ENCODE measurements at regions of chr3 and their contacts with region 1.

Region 1: DNA sequence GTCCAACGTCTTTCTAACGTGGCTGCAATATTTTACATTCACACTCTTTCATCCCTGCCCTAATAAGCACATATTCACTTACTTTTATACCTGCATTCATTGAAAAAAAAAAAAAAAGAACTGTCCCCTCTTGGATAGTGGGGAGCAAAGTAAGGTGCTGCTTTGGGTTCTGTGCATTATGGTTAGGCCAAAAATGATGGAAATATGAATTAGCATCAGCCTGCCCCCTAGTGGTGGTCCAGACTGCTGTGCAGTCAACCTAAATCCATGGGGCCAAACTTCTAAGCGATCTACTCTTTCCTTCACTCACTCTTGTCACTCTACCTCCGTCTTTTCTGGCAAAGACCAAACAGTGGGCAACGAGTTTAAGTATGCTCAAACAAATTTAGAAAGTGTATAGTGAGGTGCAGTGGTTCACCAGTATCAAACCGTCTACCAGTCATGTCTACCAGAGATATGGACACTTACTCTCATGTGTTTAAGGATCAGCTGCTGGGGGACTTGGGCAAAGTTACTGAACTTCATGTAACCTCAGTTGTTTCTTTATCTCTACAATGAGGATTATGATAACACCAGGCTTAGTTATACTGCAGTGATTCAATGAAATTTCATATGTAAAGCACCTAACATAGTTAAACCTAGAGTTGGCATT is 61.5 kb upstream of the GRM7 start:
- DNase-seq: no peak
- ATAC-seq: peak; percentile 96
- H3K4me3 ChIP-seq: no peak overlapping the region
- H3K27ac ChIP-seq: no peak overlapping the region
- H3K4me1 ChIP-seq: no peaks in the 10 kb centered on the region
- H3K27me3 ChIP-seq: no peaks in the 10 kb centered on the region
- CTCF ChIP-seq: peak; percentile 76 to 81 (median 78)
- EP300 ChIP-seq: no peak
- POLR2A ChIP-seq: no peak
- RAD21 ChIP-seq: peak; percentile 82

Region 2: GRCh38 chr3:5304789-5305683 is 1494.4 kb before region 1 on chr3:
- CTCF ChIA-PET with region 1: no interaction called
- POLR2A ChIA-PET with region 1: no interaction called
- RAD21 ChIA-PET with region 1: no interaction called
- SMC1A ChIA-PET with region 1: no interaction called
- in situ Hi-C with region 1: loop called (anchors 10 kb)
- intact Hi-C with region 1: loop called (anchors 2 kb)
- DNase-seq: no peak
- ATAC-seq: peak; percentile 95
- H3K4me3 ChIP-seq: no peak overlapping the region
- H3K27ac ChIP-seq: no peak overlapping the region
- H3K4me1 ChIP-seq: no peaks in the 10 kb centered on the region
- H3K27me3 ChIP-seq: no peaks in the 10 kb centered on the region
- CTCF ChIP-seq: peak; percentile 68 to 78 (median 75)
- EP300 ChIP-seq: no peak
- POLR2A ChIP-seq: no peak
- RAD21 ChIP-seq: peak; percentile 85

Region 3: GRCh38 chr3:5806192-5806591 is 993.2 kb before region 1 on chr3:
- CTCF ChIA-PET with region 1: no interaction called
- POLR2A ChIA-PET with region 1: no interaction called
- RAD21 ChIA-PET with region 1: no interaction called
- SMC1A ChIA-PET with region 1: no interaction called
- in situ Hi-C with region 1: no loop called
- intact Hi-C with region 1: loop called (anchors 1 kb)
- DNase-seq: no peak
- ATAC-seq: peak; percentile 74
- H3K4me3 ChIP-seq: no peak overlapping the region
- H3K27ac ChIP-seq: no peak overlapping the region
- H3K4me1 ChIP-seq: no peaks in the 10 kb centered on the region
- H3K27me3 ChIP-seq: no peaks in the 10 kb centered on the region
- CTCF ChIP-seq: peak; percentile 20 to 42 (median 34); a peak in 2 of 6 replicates
- EP300 ChIP-seq: no peak
- POLR2A ChIP-seq: no peak
- RAD21 ChIP-seq: peak; percentile 51

Region 4: DNA sequence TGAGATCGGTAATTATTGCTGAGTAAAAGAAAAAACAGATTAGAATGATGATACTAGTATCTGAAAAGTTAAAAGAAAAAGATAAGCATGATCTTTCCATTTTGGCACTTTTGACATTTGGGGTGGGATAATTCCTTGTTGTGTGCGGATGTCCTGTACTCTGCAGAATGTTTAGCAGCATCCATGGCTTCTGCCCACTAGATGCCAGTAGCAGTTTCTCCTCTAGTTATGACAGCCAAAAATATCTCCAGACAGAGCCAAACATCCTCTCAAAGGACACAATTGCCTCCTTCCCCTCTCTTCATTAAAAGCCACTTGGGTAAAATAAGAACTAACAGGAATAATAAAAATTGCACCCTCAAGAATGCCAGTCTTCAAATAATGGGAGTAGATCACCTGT is 407.3 kb before region 1 on chr3:
- CTCF ChIA-PET with region 1: no interaction called
- POLR2A ChIA-PET with region 1: no interaction called
- RAD21 ChIA-PET with region 1: interaction called, 3 read pairs
- SMC1A ChIA-PET with region 1: interaction called, 3 read pairs
- in situ Hi-C with region 1: no loop called
- intact Hi-C with region 1: loop called (anchors 10 kb)
- DNase-seq: no peak
- ATAC-seq: no peak
- H3K4me3 ChIP-seq: no peak overlapping the region
- H3K27ac ChIP-seq: no peak overlapping the region
- H3K4me1 ChIP-seq: no peaks in the 10 kb centered on the region
- H3K27me3 ChIP-seq: no peaks in the 10 kb centered on the region
- CTCF ChIP-seq: no peak; a peak in 1 of 6 replicates
- EP300 ChIP-seq: no peak
- POLR2A ChIP-seq: no peak
- RAD21 ChIP-seq: peak; percentile 38; the same call in 1 of the 2 replicates

Region 5: GRCh38 chr3:6827453-6827852 is 28.1 kb after region 1 on chr3:
- CTCF ChIA-PET with region 1: no interaction called
- POLR2A ChIA-PET with region 1: no interaction called
- RAD21 ChIA-PET with region 1: no interaction called
- SMC1A ChIA-PET with region 1: no interaction called
- in situ Hi-C with region 1: no loop called
- intact Hi-C with region 1: no loop called
- DNase-seq: no peak
- ATAC-seq: no peak
- H3K4me3 ChIP-seq: no peak overlapping the region
- H3K27ac ChIP-seq: no peak overlapping the region
- H3K4me1 ChIP-seq: no peaks in the 10 kb centered on the region
- H3K27me3 ChIP-seq: no peaks in the 10 kb centered on the region
- CTCF ChIP-seq: no peak
- EP300 ChIP-seq: no peak
- POLR2A ChIP-seq: no peak
- RAD21 ChIP-seq: no peak

Region 6: DNA sequence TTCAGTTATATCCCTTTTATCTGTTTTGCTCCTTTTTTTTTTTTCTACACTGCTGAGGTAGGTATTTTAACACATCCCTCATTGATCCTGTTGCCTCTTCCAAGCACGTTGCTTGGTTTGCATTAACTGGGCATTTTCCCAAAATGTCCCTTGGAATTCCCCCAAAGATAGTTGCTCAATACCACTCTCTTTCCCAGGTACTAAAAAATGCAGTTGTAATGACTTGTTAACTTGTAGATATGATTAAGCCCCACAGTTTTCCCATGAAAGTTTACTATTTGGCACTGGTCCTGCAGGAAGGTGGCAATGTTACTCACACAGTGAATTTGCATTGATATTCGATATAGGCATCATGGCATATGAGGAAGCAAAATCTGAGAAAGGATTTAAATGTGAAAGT is 128.7 kb after region 1 on chr3:
- CTCF ChIA-PET with region 1: no interaction called
- POLR2A ChIA-PET with region 1: no interaction called
- RAD21 ChIA-PET with region 1: no interaction called
- SMC1A ChIA-PET with region 1: no interaction called
- in situ Hi-C with region 1: no loop called
- intact Hi-C with region 1: no loop called
- DNase-seq: no peak
- ATAC-seq: no peak
- H3K4me3 ChIP-seq: no peak overlapping the region
- H3K27ac ChIP-seq: no peak overlapping the region
- H3K4me1 ChIP-seq: no peaks in the 10 kb centered on the region
- H3K27me3 ChIP-seq: no peaks in the 10 kb centered on the region
- CTCF ChIP-seq: no peak
- EP300 ChIP-seq: no peak
- POLR2A ChIP-seq: no peak
- RAD21 ChIP-seq: no peak

Region 7: DNA sequence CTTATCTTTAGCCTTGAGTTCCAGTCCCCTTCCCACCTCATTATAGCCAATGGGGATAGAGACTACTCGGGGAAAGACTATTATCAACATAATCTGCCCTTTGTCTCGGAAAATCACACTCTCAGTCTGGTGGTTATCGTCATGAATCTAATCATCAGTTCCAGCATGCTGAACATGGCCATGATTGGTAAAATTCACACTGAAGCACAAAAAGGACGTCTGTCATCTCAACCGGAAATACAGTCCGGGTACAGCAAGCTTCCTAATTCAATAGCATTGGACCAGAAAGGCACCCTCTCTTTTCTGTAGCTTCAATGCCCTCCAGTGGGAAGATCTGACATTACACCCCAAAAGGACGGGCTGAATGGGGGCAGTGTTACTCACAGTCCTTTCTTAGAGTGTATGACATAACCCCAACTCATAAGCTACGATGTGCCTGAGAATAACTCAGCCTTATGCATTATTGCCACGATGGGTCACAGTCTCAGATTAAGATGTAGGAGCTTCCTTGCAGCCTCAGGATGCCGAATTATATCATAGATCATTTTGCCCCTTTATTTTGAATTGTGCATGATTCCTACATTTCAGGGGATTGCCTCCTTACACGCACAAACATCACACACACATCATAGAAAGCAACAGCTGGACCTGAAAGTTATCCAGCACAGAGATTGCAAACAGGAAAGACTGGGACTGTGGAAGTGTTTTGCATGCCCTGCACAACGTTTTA is 1311.8 kb after region 1 on chr3:
- CTCF ChIA-PET with region 1: no interaction called
- POLR2A ChIA-PET with region 1: no interaction called
- RAD21 ChIA-PET with region 1: no interaction called
- SMC1A ChIA-PET with region 1: no interaction called
- in situ Hi-C with region 1: no loop called
- intact Hi-C with region 1: loop called (anchors 5 kb)
- DNase-seq: peak; percentile 16
- ATAC-seq: peak; percentile 99
- H3K4me3 ChIP-seq: no peak overlapping the region
- H3K27ac ChIP-seq: no peak overlapping the region
- H3K4me1 ChIP-seq: no peaks in the 10 kb centered on the region
- H3K27me3 ChIP-seq: no peaks in the 10 kb centered on the region
- CTCF ChIP-seq: peak; percentile 70 to 80 (median 72)
- EP300 ChIP-seq: no peak
- POLR2A ChIP-seq: no peak
- RAD21 ChIP-seq: peak; percentile 86

Measured in GM12878 (cell line).